GM12878 (cell line): ENCODE measurements at regions of chr1 and their contacts with region 1.

Region 1: DNA sequence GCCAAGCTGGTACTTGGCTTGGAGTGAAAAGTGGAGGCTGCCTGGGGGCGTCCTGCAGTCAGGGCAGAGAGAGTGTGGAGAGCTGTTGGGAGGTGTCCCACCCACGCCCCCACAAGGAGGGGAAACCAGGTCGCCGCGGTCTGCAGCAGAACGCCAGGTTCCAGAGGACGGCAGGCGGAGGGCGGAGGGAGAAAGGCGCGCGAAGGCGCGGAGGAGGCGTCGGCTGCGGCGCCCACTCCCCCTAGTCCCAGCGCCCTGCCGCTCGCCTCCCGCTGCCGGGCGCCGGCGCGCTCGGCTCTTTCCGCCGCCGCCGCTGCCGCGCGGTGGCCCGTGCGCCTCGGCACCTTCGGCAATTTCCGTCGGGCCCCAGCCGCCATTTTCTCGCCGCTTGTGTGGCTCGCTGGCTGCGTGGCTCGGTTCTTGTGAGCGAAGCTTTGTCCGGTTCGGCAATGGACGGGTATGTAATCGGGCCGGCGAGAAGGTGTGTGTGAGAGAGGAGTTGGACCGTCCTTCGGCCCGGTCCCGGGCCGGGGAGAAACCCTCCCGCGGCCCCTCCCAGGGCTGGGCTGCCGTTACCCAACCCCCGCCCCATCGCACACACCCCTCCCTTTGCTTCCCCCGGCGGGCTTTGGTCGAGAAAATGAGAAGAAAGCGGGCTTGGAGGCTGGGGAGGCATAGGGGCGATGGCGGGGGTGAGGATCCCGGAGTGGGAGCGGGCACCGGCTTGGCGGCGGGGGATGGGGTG is at the start of gene PTBP2:
- DNase-seq: peak; percentile 25
- ATAC-seq: peak; percentile 96
- H3K4me3 ChIP-seq: peak within 1 kb of the TSS; percentile 90
- H3K27ac ChIP-seq: peak within 1 kb of the TSS; percentile 64
- H3K4me1 ChIP-seq: peaks cover 4% of the 10 kb centered on the region
- H3K27me3 ChIP-seq: no peaks in the 10 kb centered on the region
- CTCF ChIP-seq: no peak
- EP300 ChIP-seq: no peak
- POLR2A ChIP-seq: peak; percentile 85
- RAD21 ChIP-seq: no peak
- polyA plus RNA-seq, gene PTBP2: 5.8 to 9.7 TPM

Region 2: DNA sequence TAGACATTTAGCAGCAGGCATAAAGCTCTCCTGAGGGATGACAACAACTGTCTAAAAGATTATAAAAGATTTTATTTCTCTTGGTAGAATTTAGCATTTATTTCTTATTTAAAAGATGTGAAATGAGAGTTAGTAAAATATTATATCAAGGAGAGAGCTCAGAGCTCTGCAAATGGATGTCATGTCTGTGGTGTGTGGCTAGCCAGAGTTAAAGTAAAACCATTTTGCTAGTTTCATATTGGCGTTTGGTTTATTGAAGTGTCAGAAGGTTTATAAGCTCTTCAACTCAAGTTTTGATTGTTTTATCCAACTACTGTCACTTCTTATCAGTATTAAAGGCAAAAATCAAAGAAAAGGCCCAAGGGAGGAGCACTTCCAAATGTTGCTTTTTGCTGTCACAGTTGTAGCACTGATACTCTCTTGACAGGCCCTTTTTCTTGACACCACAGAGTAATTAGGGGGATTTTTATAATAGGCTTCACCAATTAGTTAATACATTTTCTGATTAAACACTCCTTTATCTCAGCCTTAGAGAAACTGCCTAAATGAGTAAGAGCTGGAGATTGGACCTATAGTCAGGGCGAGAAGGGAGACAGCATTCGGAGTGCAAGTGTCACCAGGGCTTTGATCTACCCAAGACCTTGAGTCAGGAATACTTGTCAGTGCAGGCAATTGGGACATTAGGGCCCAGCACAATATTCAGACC is 233.9 kb after region 1 on chr1:
- CTCF ChIA-PET with region 1: no interaction called
- POLR2A ChIA-PET with region 1: no interaction called
- RAD21 ChIA-PET with region 1: no interaction called
- SMC1A ChIA-PET with region 1: no interaction called
- in situ Hi-C with region 1: no loop called
- intact Hi-C with region 1: loop called (anchors 10 kb)
- DNase-seq: no peak
- ATAC-seq: peak; percentile 76
- H3K4me3 ChIP-seq: no peak overlapping the region
- H3K27ac ChIP-seq: no peak overlapping the region
- H3K4me1 ChIP-seq: no peaks in the 10 kb centered on the region
- H3K27me3 ChIP-seq: no peaks in the 10 kb centered on the region
- CTCF ChIP-seq: no peak
- EP300 ChIP-seq: no peak
- POLR2A ChIP-seq: no peak
- RAD21 ChIP-seq: no peak